Prostate gland (tissue), 2 donors: ENCODE measurements at regions of chr17 and their contacts with region 1.

Region 1: DNA sequence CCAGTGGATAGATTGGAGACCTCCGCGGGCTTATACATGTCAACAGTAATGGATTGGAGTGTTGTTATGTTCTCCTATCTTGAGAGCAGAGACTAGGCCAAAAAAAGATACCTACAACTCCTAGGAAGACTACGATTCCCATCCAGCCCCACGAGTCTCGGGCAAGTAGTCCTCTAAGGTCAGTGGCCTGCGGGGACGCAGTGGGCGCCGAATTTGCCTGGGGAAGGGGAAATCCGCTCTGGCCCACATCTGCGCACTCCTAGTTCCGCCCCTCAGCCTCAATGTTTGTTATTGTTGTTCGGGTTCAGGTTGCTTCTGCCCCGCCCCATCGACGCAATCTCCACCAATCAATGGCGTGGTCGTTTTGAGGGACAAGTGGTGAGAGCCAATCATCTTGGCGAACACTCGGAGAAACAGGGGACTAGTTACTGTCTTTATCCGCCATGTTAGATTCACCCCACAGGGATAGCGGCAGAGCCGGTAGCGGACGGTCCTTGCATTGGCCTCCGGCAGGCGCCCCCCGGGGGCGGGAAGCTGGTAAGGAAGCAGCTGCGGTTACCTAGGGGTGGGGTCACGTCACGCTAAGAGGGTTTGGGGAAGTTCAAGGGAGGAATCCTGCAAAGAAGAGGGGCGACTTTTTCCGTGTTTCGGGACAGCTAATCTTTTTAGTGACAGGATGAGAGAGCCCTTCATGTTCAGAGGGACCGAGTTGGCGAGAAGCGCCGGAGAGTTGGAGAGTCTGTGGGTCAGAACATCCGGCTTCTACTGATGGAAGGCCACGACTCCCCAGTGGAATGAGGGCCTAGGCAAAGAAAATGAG is at the start of gene NBR1:
- DNase-seq: peak; percentile 98
- H3K4me3 ChIP-seq: peak within 1 kb of the TSS; percentile 68 to 81
- H3K27ac ChIP-seq: peak within 1 kb of the TSS; percentile 98 to 99
- H3K4me1 ChIP-seq: no peaks in the 10 kb centered on the region
- H3K27me3 ChIP-seq: no peaks in the 10 kb centered on the region
- CTCF ChIP-seq: no peak
- POLR2A ChIP-seq: peak; percentile 91
- total RNA-seq, gene NBR1: 120 to 156 TPM

Region 2: GRCh38 chr17:43006639-43007551 is 164.1 kb before region 1 on chr17 and contains the start of gene IFI35:
- intact Hi-C with region 1: loop called (anchors 5 kb)
- DNase-seq: peak; percentile 85
- H3K4me3 ChIP-seq: peak within 1 kb of the TSS; percentile 64 to 65
- H3K27ac ChIP-seq: peak within 1 kb of the TSS; percentile 94 to 96
- H3K4me1 ChIP-seq: no peaks in the 10 kb centered on the region
- H3K27me3 ChIP-seq: no peaks in the 10 kb centered on the region
- CTCF ChIP-seq: peak in 3 of 4 experiments; percentile 51 to 53 (median 52)
- POLR2A ChIP-seq: peak; percentile 41
- total RNA-seq, gene IFI35: 35.6 to 40.1 TPM

Region 3: DNA sequence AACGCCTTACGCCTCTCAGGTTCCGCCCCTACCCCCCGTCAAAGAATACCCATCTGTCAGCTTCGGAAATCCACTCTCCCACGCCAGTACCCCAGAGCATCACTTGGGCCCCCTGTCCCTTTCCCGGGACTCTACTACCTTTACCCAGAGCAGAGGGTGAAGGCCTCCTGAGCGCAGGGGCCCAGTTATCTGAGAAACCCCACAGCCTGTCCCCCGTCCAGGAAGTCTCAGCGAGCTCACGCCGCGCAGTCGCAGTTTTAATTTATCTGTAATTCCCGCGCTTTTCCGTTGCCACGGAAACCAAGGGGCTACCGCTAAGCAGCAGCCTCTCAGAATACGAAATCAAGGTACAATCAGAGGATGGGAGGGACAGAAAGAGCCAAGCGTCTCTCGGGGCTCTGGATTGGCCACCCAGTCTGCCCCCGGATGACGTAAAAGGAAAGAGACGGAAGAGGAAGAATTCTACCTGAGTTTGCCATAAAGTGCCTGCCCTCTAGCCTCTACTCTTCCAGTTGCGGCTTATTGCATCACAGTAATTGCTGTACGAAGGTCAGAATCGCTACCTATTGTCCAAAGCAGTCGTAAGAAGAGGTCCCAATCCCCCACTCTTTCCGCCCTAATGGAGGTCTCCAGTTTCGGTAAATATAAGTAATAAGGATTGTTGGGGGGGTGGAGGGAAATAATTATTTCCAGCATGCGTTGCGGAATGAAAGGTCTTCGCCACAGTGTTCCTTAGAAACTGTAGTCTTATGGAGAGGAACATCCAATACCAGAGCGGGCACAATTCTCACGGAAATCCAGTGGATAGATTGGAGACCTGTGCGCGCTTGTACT is 45.6 kb before region 1 on chr17 and contains the start of gene BRCA1:
- intact Hi-C with region 1: loop called (anchors 1 kb)
- DNase-seq: peak; percentile 96
- H3K4me3 ChIP-seq: peak within 1 kb of the TSS; percentile 44 to 60
- H3K27ac ChIP-seq: peak within 1 kb of the TSS; percentile 33 to 59
- H3K4me1 ChIP-seq: no peaks in the 10 kb centered on the region
- H3K27me3 ChIP-seq: no peaks in the 10 kb centered on the region
- CTCF ChIP-seq: peak in 1 of 4 experiments; percentile 14
- POLR2A ChIP-seq: peak; percentile 62
- total RNA-seq, gene BRCA1: 9.1 to 12.8 TPM

Region 4: GRCh38 chr17:43140396-43141332 is 30.3 kb before region 1 on chr17:
- intact Hi-C with region 1: no loop called
- DNase-seq: no peak
- H3K4me3 ChIP-seq: no peak overlapping the region
- H3K27ac ChIP-seq: no peak overlapping the region
- H3K4me1 ChIP-seq: no peaks in the 10 kb centered on the region
- H3K27me3 ChIP-seq: no peaks in the 10 kb centered on the region
- CTCF ChIP-seq: no peak
- POLR2A ChIP-seq: no peak

Region 5: DNA sequence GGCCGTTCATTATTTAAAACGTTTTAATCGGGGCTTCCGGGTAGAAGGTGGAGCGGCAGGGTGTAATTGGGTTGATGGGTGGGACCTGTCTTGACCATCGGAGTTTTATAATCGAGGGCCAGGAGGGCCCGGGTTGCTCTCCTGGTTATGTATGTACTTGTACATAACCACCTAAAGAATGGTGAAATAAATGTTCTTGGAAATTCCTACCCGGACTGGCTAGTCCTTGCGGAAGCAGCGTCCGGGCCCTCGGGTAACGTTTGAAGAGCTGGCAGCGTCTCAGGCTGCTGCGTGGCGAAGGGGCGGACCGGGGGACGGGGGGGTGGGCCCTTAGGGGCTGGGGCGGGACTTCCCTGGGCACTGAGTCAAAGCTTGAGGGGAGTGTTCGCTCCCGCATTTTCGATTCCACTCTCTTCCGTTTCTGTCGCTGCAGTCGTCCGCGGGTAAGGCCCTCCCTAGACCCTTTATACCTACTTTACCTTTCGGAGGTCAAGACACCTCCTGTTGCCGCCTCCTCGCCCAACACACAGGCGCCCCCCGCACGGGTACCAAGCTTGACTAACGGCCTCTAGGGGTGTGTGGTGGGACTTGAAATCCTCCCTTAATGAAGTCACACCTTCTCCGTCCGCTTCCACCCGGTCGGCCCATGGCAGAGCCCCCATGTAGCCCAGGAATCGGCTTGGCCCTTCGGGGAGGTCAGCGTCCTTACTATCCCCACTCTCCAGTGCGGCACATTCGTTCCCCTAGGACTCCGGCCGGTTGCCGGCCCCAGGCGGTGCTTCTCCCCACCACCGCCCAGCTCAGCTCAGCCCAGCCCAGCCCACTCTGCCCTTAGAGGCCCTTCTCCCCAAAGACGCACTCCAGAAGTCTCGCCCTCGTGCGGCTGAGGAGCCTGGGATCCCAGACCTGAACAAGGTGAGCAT is 40.8 kb after region 1 on chr17 and contains the start of gene TMEM106A:
- intact Hi-C with region 1: loop called (anchors 5 kb)
- DNase-seq: peak; percentile 79
- H3K4me3 ChIP-seq: peak within 1 kb of the TSS; percentile 40
- H3K27ac ChIP-seq: peak within 1 kb of the TSS; percentile 77 to 83
- H3K4me1 ChIP-seq: peaks cover 5% of the 10 kb centered on the region
- H3K27me3 ChIP-seq: no peaks in the 10 kb centered on the region
- CTCF ChIP-seq: peak in 2 of 4 experiments; percentile 14 to 23
- POLR2A ChIP-seq: peak; percentile 65
- total RNA-seq, gene TMEM106A: 2.6 to 8.0 TPM

Region 6: GRCh38 chr17:43360739-43361505 is 189.9 kb after region 1 on chr17:
- intact Hi-C with region 1: loop called (anchors 2 kb)
- DNase-seq: peak; percentile 90
- H3K4me3 ChIP-seq: peak overlapping the region; percentile 38 to 43
- H3K27ac ChIP-seq: peak overlapping the region; percentile 91 to 94
- H3K4me1 ChIP-seq: peaks cover 5% of the 10 kb centered on the region
- H3K27me3 ChIP-seq: no peaks in the 10 kb centered on the region
- CTCF ChIP-seq: no peak
- POLR2A ChIP-seq: peak; percentile 88